PC-9 (cell line): ENCODE measurements at regions of chr14 and their contacts with region 1.

Region 1: DNA sequence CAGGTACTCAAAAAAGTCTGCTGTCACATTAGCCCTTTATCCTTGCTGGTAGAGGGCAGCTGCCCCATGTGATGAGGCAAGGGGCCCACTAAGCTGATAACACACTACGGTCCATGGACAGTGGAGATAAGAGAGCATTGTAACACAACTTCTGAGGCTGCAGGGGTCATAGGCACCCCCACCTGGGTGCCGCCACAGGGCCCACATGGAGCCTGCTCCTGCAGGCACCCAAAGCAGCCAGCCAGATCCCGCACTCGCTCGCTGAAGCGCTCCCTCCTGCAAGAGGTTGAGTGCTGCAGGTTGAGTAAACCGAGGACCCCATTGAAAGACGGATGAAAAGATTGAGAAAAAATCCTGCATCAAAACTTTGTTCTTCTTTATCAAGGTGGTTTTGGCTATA is 566.3 kb upstream of the NOVA1 start:
- DNase-seq: no peak
- H3K4me3 ChIP-seq: no peak overlapping the region
- H3K27ac ChIP-seq: no peak overlapping the region
- H3K4me1 ChIP-seq: no peaks in the 10 kb centered on the region
- H3K27me3 ChIP-seq: no peaks in the 10 kb centered on the region
- CTCF ChIP-seq: no peak

Region 2: DNA sequence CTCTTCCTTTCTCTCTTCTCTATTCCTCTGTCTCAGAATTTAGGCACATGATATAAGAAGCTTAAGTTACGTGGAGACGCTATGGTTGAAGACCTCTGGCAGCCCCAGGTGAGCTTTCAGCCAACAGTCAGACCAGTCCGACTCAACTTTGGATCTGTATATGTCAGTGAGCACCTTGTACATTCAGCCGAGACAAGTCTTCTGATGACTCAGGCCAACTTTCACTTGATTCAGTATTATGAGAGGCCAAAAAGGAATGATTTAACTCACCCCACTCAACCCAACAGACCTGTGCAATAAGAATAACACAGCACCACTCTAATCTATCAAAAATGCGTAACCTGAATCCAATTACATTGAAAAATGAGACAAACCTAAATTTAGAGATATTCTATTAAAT is 1555.0 kb after region 1 on chr14:
- CTCF ChIA-PET with region 1: interaction called, 15 read pairs
- POLR2A ChIA-PET with region 1: no interaction called
- intact Hi-C with region 1: no loop called
- DNase-seq: no peak
- H3K4me3 ChIP-seq: no peak overlapping the region
- H3K27ac ChIP-seq: no peak overlapping the region
- H3K4me1 ChIP-seq: no peaks in the 10 kb centered on the region
- H3K27me3 ChIP-seq: no peaks in the 10 kb centered on the region
- CTCF ChIP-seq: no peak